GM12878 (cell line): ENCODE measurements at regions of chr16 and their contacts with region 1.

Region 1: GRCh38 chr16:17301593-17302135 is 169.1 kb downstream of the XYLT1 start:
- DNase-seq: peak; percentile 98
- ATAC-seq: peak; percentile 91
- H3K4me3 ChIP-seq: no peak overlapping the region
- H3K27ac ChIP-seq: no peak overlapping the region; the same call in none of the 2 replicates
- H3K4me1 ChIP-seq: peaks cover 44% of the 10 kb centered on the region
- H3K27me3 ChIP-seq: no peaks in the 10 kb centered on the region
- CTCF ChIP-seq: no peak
- EP300 ChIP-seq: peak; percentile 87 to 97
- POLR2A ChIP-seq: no peak
- RAD21 ChIP-seq: peak; percentile 5; the same call in 1 of the 2 replicates

Region 2: DNA sequence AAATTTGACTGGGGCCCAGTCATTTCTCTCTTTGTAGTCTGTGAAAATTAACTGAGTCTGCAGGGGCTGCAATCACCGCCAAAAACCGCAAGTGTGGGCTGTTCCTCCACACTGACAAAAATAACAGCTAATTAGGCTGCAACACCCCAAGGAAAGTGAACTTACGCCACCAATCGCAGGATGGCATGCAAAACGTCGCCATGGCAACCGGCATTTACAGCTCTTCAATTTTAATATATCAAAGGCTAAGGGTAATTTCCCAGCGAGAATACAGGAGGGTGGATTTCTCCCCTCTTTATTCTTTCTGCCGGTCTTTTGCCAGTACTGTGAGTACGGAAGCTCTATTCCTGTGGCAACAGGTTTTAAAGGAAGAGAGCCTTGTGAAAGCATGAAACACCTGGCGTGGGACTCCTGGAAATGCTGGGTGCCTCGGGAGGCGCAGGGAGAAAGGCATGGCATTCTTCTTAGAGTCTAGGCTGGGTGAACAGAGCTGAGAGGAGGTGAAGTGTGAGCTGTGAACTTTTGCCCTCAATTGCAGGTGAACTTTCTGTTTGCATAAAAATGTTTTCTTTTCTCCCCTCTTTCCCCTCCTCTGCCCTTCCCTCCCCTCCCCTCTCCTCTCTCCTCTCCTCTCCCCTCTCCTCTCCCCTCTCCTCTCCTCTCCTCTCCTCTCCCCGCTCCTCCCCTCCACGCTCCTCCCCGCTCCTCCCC is 230.6 kb before region 1 on chr16:
- CTCF ChIA-PET with region 1: no interaction called
- POLR2A ChIA-PET with region 1: no interaction called
- RAD21 ChIA-PET with region 1: interaction called, 15 read pairs
- SMC1A ChIA-PET with region 1: interaction called, 9 read pairs
- in situ Hi-C with region 1: no loop called
- intact Hi-C with region 1: no loop called
- DNase-seq: peak; percentile 98
- ATAC-seq: peak; percentile 81
- H3K4me3 ChIP-seq: peak overlapping the region; percentile 77
- H3K27ac ChIP-seq: peak overlapping the region; percentile 95
- H3K4me1 ChIP-seq: peaks cover 44% of the 10 kb centered on the region
- H3K27me3 ChIP-seq: no peaks in the 10 kb centered on the region
- CTCF ChIP-seq: 0 out of 6 replicates have a peak, but pooled peaks of 1 of the 3 experiments have one; percentile 16
- EP300 ChIP-seq: peak; percentile 89 to 94
- POLR2A ChIP-seq: no peak
- RAD21 ChIP-seq: 0 out of 2 replicates have a peak, but pooled peaks have one; percentile 23

Region 3: GRCh38 chr16:17283016-17283415 is 18.6 kb before region 1 on chr16:
- CTCF ChIA-PET with region 1: interaction called, 54 read pairs
- POLR2A ChIA-PET with region 1: interaction called, 32 read pairs
- RAD21 ChIA-PET with region 1: interaction called, 67 read pairs
- SMC1A ChIA-PET with region 1: interaction called, 241 read pairs
- in situ Hi-C with region 1: no loop called
- intact Hi-C with region 1: no loop called
- DNase-seq: no peak
- ATAC-seq: no peak
- H3K4me3 ChIP-seq: no peak overlapping the region
- H3K27ac ChIP-seq: no peak overlapping the region
- H3K4me1 ChIP-seq: peaks cover 23% of the 10 kb centered on the region
- H3K27me3 ChIP-seq: no peaks in the 10 kb centered on the region
- CTCF ChIP-seq: no peak
- EP300 ChIP-seq: no peak
- POLR2A ChIP-seq: no peak
- RAD21 ChIP-seq: no peak

Region 4: GRCh38 chr16:17369421-17370222 is 68.0 kb after region 1 on chr16:
- CTCF ChIA-PET with region 1: interaction called, 29 read pairs
- POLR2A ChIA-PET with region 1: interaction called, 7 read pairs
- RAD21 ChIA-PET with region 1: interaction called, 50 read pairs
- SMC1A ChIA-PET with region 1: interaction called, 163 read pairs
- in situ Hi-C with region 1: no loop called
- intact Hi-C with region 1: loop called (anchors 2 kb)
- DNase-seq: peak; percentile 53
- ATAC-seq: peak; percentile 94
- H3K4me3 ChIP-seq: peak overlapping the region; percentile 41; the same call in 1 of the 2 replicates
- H3K27ac ChIP-seq: peak overlapping the region; percentile 36
- H3K4me1 ChIP-seq: peaks cover 52% of the 10 kb centered on the region
- H3K27me3 ChIP-seq: no peaks in the 10 kb centered on the region
- CTCF ChIP-seq: no peak
- EP300 ChIP-seq: peak in 1 of 2 experiments; percentile 49; a peak in 1 of 4 replicates
- POLR2A ChIP-seq: peak; percentile 50
- RAD21 ChIP-seq: no peak

Region 5: DNA sequence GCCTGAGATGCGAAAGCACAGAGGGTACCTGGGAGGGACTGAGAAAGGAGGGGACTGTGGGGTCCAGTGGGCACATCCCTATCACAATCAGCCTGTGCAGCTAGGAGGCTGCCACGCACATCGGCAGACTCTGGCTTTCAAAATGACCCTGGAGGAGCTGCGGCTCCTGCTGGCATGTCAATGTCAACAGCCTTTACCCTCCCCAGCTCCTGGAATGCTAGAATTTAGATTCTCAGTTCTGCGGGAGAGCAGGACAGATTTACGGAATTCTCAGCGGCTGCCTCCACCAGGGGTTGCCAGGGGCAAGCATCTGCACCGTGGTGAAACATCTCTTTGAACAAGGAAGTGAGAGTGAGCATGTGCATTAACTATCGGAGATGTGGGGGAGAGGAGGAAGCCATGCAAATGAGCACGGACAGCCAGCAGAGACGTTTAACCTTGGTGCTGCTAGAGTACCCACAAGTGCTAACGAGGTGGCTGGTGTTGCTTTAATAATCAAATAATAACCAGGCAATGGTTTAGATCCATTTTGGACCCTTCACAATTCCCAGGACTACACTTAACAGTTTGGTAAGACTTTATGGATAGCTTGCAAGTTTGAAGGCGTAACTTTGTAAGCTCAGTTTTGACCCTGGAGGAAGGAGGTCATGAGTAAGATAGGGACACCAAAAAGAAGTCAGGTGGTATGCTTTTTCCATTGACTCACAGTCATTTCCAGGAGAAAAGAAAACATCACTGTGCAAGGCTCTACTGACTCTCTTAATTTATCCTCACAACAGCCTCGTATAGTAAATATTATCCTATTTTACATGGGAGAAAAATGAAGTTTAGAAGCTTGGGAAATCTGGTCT is 115.0 kb after region 1 on chr16:
- CTCF ChIA-PET with region 1: interaction called, 4 read pairs
- POLR2A ChIA-PET with region 1: interaction called, 15 read pairs
- RAD21 ChIA-PET with region 1: interaction called, 36 read pairs
- SMC1A ChIA-PET with region 1: interaction called, 22 read pairs
- in situ Hi-C with region 1: no loop called
- intact Hi-C with region 1: no loop called
- DNase-seq: peak; percentile 89
- ATAC-seq: peak; percentile 95
- H3K4me3 ChIP-seq: peak overlapping the region; percentile 34; the same call in 1 of the 2 replicates
- H3K27ac ChIP-seq: peak overlapping the region; percentile 90
- H3K4me1 ChIP-seq: peaks cover 51% of the 10 kb centered on the region
- H3K27me3 ChIP-seq: no peaks in the 10 kb centered on the region
- CTCF ChIP-seq: peak; percentile 23 to 38 (median 26); a peak in 5 of 6 replicates
- EP300 ChIP-seq: peak; percentile 83 to 90
- POLR2A ChIP-seq: peak; percentile 73
- RAD21 ChIP-seq: peak; percentile 59

Region 6: GRCh38 chr16:17552351-17552750 is 250.7 kb after region 1 on chr16:
- CTCF ChIA-PET with region 1: no interaction called
- POLR2A ChIA-PET with region 1: no interaction called
- RAD21 ChIA-PET with region 1: no interaction called
- SMC1A ChIA-PET with region 1: no interaction called
- in situ Hi-C with region 1: no loop called
- intact Hi-C with region 1: no loop called
- DNase-seq: no peak
- ATAC-seq: no peak
- H3K4me3 ChIP-seq: no peak overlapping the region
- H3K27ac ChIP-seq: no peak overlapping the region
- H3K4me1 ChIP-seq: peaks cover 7% of the 10 kb centered on the region; the same call in 1 of the 2 replicates
- H3K27me3 ChIP-seq: no peaks in the 10 kb centered on the region; a peak in 1 of 4 replicates
- CTCF ChIP-seq: no peak
- EP300 ChIP-seq: no peak
- POLR2A ChIP-seq: no peak
- RAD21 ChIP-seq: no peak